ENCODE measurements at regions of chr18 and their contacts with region 1.

Region 1: DNA sequence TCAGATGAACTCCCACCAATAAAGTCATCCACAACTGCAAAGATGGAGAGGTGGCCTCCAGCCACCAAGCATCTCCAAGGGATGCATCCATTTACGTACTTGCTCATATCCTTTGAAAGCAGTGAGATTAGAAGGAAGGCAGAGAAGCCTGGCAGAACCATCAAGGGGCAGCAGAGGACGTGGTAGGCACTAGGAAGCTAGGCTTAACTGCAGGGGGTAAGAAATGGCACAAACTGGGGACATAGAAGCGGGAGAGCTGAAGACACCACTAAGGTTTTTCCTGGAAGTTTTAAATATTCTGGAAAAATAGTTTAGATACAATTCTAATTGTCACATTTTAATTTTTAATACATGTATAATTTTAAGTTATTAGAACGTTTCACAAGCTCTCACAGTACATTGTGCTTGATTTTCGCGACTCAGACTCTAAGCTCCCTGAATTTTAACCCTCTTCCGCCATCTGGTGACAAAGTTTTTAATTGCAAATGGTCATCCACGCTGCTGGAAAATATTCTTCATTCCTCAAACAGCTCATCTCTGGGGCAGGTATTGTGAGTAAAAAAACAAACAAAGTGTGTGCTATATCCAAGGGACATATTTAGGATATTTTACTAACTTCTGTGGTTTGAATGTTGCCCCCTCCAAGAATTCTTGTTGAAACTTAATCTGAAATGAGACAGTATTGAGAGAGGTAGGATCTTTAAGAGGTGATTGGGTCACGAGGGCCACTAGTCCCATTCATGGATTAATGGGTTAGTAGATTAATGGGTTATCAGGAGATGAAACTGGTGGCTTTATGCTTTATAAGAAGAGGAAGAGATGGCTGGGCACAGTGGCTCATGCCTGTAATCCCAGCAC is 1.6 kb upstream of the PSTPIP2 start:
- DNase-seq: peak; percentile 70
- ATAC-seq: peak; percentile 65
- H3K4me3 Mint-ChIP-seq: no peak overlapping the region
- H3K27ac Mint-ChIP-seq: peak overlapping the region; percentile 20
- H3K4me1 Mint-ChIP-seq: peaks cover 39% of the 10 kb centered on the region
- H3K27me3 Mint-ChIP-seq: no peaks in the 10 kb centered on the region
- CTCF ChIP-seq: peak; percentile 89

Region 2: GRCh38 chr18:45802608-45803492 is 270.9 kb before region 1 on chr18:
- CTCF ChIA-PET with region 1: no interaction called
- POLR2A ChIA-PET with region 1: no interaction called
- intact Hi-C with region 1: no loop called
- DNase-seq: peak; percentile 58
- ATAC-seq: peak; percentile 83
- H3K4me3 Mint-ChIP-seq: no peak overlapping the region
- H3K27ac Mint-ChIP-seq: no peak overlapping the region
- H3K4me1 Mint-ChIP-seq: peaks cover 9% of the 10 kb centered on the region
- H3K27me3 Mint-ChIP-seq: peaks cover 2% of the 10 kb centered on the region
- CTCF ChIP-seq: no peak

Region 3: DNA sequence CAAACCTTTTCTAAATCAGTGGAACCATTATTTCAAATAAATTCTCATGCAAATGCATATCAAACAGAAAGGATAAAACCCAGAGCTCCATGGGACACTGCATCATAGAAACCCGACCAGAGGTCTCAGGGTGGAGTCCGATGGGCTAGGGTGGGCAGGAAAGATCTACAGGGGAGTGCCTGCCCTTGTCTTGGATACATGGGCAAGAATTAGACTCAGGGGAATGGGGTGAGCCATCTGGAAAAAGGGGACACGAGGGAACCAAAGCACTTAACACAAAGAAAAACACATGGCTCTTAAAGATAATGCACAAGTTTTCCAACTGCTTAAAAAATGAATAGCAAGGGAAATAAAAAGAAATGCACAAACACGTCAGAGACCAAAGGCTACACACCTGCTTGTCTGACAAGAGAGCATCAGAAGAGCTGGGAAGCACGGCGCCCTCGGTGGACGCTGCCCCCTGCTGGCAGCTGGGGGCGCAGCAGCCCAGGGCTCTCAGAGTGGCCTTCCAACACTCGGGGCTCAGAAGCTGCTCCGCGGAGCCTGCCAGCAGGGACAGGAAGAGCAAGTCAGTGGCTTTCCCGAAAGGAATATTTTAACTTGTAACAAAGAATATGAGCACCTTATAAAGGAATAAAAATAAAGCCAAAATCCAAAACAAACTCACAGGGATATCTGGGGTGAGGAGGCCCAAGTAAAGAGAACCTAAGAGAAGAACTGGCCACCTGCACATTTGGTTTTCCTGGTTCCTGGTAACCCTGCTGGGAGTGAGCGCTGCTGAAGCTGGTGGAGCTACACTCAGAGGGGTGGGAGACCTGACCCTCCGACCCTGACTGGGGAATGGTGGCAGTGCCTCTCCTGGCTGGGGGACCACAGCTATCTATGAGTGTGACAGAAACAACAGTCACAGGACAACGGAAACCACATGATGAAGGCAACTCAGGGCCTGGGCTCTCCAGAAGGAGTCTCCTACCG is 193.7 kb before region 1 on chr18:
- CTCF ChIA-PET with region 1: interaction called, 29 read pairs
- POLR2A ChIA-PET with region 1: no interaction called
- intact Hi-C with region 1: loop called (anchors 10 kb)
- DNase-seq: peak; percentile 79
- ATAC-seq: peak; percentile 94
- H3K4me3 Mint-ChIP-seq: no peak overlapping the region
- H3K27ac Mint-ChIP-seq: no peak overlapping the region
- H3K4me1 Mint-ChIP-seq: peaks cover 17% of the 10 kb centered on the region
- H3K27me3 Mint-ChIP-seq: no peaks in the 10 kb centered on the region
- CTCF ChIP-seq: peak; percentile 100

Region 4: DNA sequence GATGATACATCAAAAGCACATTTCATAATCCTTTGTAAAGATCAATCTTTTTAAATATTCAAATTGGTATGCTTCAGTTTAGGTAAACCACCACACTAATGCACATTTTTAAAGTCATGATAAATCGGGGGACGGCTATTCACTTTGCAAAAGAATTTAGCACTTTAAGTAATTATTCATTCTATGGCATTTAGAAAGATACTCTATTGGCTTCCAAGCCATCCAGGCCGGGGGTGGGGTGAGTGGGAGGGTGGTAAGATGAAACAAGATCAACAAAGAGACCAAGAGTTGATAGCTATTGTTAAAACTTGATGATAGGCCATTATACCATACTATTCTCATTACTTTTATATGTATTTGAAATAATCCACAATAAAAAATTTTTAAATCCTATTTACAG is 147.6 kb before region 1 on chr18:
- CTCF ChIA-PET with region 1: interaction called, 12 read pairs
- POLR2A ChIA-PET with region 1: interaction called, 3 read pairs
- intact Hi-C with region 1: loop called (anchors 10 kb)
- DNase-seq: no peak
- ATAC-seq: no peak
- H3K4me3 Mint-ChIP-seq: no peak overlapping the region
- H3K27ac Mint-ChIP-seq: no peak overlapping the region
- H3K4me1 Mint-ChIP-seq: no peaks in the 10 kb centered on the region
- H3K27me3 Mint-ChIP-seq: no peaks in the 10 kb centered on the region
- CTCF ChIP-seq: no peak

Region 5: GRCh38 chr18:45967007-45967706 is 106.5 kb before region 1 on chr18 and contains the start of gene EPG5:
- CTCF ChIA-PET with region 1: interaction called, 16 read pairs
- POLR2A ChIA-PET with region 1: no interaction called
- intact Hi-C with region 1: no loop called
- DNase-seq: peak; percentile 97
- ATAC-seq: peak; percentile 97
- H3K4me3 Mint-ChIP-seq: peak within 1 kb of the TSS; percentile 99
- H3K27ac Mint-ChIP-seq: peak within 1 kb of the TSS; percentile 94
- H3K4me1 Mint-ChIP-seq: peaks cover 45% of the 10 kb centered on the region
- H3K27me3 Mint-ChIP-seq: no peaks in the 10 kb centered on the region
- CTCF ChIP-seq: no peak
- total RNA-seq, gene EPG5: 15.3 to 19.0 TPM

Region 6: DNA sequence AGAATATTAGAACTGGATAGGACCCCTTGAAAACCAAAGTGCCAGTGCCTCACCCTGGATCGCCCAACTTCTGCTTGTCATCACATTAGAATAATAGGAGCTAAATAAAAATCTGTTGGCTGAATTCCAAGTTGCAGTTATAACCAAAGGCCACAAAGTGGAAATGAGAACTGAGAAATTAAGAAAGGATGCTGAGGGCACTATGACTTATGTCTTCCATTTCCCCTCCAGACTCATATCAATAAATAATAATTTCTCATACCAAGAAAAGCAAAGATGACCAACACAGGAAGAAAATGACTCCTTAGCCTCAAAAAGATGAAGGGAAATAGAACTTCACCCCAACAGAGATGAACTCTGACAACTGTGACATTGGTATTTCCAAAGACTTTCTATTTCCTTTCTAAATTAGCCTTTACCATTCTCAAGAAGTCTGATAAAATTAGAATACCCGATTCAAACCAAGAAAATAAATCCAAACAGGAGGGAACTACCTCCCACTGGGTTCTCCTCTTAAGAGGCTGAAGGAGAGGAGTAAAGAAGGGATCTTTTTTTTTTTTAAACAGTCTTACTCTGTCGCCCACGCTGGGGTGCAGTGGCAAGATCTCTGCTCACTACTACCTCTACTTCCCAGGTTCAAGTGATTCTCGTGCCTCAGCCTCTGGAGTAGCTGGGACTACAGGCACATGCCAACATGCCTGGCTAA is 60.1 kb before region 1 on chr18:
- CTCF ChIA-PET with region 1: interaction called, 10 read pairs
- POLR2A ChIA-PET with region 1: no interaction called
- intact Hi-C with region 1: no loop called
- DNase-seq: peak; percentile 45
- ATAC-seq: peak; percentile 90
- H3K4me3 Mint-ChIP-seq: no peak overlapping the region
- H3K27ac Mint-ChIP-seq: peak overlapping the region; percentile 62
- H3K4me1 Mint-ChIP-seq: peaks cover 23% of the 10 kb centered on the region
- H3K27me3 Mint-ChIP-seq: no peaks in the 10 kb centered on the region
- CTCF ChIP-seq: no peak

Region 7: DNA sequence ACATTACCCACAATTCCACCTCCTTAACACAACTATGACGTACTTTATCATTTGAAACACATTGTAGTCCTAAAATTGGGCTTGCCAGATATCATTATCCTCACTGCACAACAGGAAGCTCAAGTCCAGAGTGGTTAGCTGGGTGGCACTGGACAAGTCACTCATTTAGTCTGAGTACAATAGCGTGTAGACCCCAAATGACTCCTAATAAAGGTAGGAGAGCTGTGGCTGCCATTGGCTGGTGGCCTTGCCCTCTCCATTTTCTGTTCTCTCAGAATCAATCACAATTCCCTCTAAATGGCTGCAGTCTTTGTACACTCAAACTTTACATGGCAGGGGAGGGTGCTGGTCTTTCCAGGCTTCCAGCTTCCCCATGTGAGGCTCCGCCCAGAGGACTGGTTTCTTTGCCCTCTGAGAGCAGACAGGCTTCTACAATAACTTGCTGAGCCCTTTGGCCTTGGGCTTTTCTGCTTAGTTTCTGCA is 13.3 kb before region 1 on chr18:
- CTCF ChIA-PET with region 1: interaction called, 15 read pairs
- POLR2A ChIA-PET with region 1: interaction called, 5 read pairs
- intact Hi-C with region 1: no loop called
- DNase-seq: no peak
- ATAC-seq: no peak
- H3K4me3 Mint-ChIP-seq: no peak overlapping the region
- H3K27ac Mint-ChIP-seq: no peak overlapping the region
- H3K4me1 Mint-ChIP-seq: peaks cover 29% of the 10 kb centered on the region
- H3K27me3 Mint-ChIP-seq: no peaks in the 10 kb centered on the region
- CTCF ChIP-seq: no peak

Region 8: DNA sequence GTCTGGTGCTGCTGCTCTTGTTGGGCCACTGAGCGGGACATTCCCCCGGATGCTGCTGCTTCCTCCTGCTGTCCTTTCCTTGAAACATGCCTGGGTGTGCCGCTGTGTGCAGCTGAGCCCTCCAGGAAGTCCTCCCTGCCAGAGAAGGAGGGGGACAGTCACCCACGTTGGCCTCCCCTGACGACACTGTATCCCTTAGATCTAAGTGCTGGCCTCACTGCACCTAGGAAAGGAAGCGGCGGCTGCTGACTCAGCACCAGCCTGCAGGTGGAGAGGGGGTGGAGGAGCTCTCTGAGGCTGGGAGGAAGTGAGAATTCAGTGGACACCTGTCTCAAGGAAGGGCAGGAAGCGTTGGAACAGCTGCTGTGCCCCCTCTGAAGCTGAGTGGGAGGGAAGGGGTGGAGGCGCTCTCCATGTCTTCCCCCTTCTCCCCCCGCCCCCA is 270.2 kb after region 1 on chr18:
- CTCF ChIA-PET with region 1: no interaction called
- POLR2A ChIA-PET with region 1: no interaction called
- intact Hi-C with region 1: no loop called
- DNase-seq: peak; percentile 83
- ATAC-seq: peak; percentile 97
- H3K4me3 Mint-ChIP-seq: no peak overlapping the region
- H3K27ac Mint-ChIP-seq: peak overlapping the region; percentile 37
- H3K4me1 Mint-ChIP-seq: peaks cover 20% of the 10 kb centered on the region
- H3K27me3 Mint-ChIP-seq: peaks cover 5% of the 10 kb centered on the region
- CTCF ChIP-seq: no peak